Transverse colon (tissue), 4 donors: ENCODE measurements at regions of chr17 and their contacts with region 1.

Region 1: GRCh38 chr17:17496189-17497064 is at the start of gene RASD1:
- DNase-seq: peak; percentile 93
- H3K4me3 ChIP-seq: peak within 1 kb of the TSS; percentile 49 to 67 (median 62)
- H3K27ac ChIP-seq: peak within 1 kb of the TSS; percentile 84 to 87 (median 87)
- H3K4me1 ChIP-seq: peaks cover 9 to 42% (median 28%) of the 10 kb centered on the region in 4 donors
- H3K27me3 ChIP-seq: peaks cover 7% of the 10 kb centered on the region
- CTCF ChIP-seq: peak; percentile 62 to 98 (median 96)
- EP300 ChIP-seq: no peak
- POLR2A ChIP-seq: peak; percentile 97
- total RNA-seq, gene RASD1: 23.5 to 83.8 (median 61.3) TPM

Region 2: GRCh38 chr17:17356149-17356930 is 140.1 kb before region 1 on chr17:
- in situ Hi-C with region 1: loop called in 1 of 4 experiments (anchors 10 kb)
- intact Hi-C with region 1: no loop called
- DNase-seq: peak; percentile 77
- H3K4me3 ChIP-seq: no peak overlapping the region
- H3K27ac ChIP-seq: no peak overlapping the region
- H3K4me1 ChIP-seq: peaks cover 0 to 4% (median 0%) of the 10 kb centered on the region in 4 donors
- H3K27me3 ChIP-seq: no peaks in the 10 kb centered on the region
- CTCF ChIP-seq: peak; percentile 99 to 100 (median 99)
- EP300 ChIP-seq: no peak
- POLR2A ChIP-seq: no peak

Region 3: GRCh38 chr17:17568749-17569195 is 72.3 kb after region 1 on chr17:
- in situ Hi-C with region 1: no loop called
- intact Hi-C with region 1: loop called (anchors 5 kb)
- DNase-seq: peak; percentile 80
- H3K4me3 ChIP-seq: no peak overlapping the region
- H3K27ac ChIP-seq: no peak overlapping the region
- H3K4me1 ChIP-seq: peaks cover 6 to 30% (median 14%) of the 10 kb centered on the region in 4 donors
- H3K27me3 ChIP-seq: no peaks in the 10 kb centered on the region
- CTCF ChIP-seq: peak; percentile 69 to 84 (median 75)
- EP300 ChIP-seq: no peak
- POLR2A ChIP-seq: no peak

Region 4: DNA sequence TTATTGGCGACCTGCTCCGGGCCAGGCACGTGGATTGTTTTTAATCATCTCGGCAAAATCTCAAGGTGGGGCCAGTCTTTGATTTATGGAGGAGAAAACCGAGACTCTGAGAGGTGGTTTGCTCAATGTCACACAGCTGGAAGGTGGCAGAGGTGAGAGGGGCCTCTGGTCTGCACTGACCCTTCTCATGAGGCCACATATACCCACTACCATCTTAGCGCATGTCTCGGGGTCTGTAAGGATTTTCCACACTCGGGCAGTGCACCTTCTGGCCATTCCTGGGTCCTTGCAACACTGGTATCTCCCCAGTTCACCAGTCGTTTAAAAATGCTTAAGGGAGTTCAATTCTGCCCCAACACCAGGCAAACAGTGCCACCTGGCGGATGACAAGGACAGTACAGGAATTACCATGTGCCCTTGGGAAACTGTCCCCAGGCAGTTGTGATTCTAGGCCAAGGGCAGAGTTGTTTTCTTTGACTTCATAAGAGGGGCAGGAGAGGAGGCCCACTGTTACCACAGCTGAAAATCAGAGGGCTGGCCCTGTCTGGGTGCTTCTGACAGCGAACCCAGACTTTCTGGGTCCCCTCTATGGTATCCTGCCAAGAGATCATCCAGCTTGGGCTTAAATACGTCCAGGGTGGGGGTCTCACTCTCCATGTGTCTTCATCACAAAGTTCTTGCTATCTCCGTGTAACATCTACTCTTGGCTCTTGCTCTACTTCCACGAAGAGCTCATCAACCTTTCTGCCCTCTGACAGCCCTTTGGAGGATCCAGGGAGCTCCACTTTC is 145.4 kb after region 1 on chr17:
- in situ Hi-C with region 1: loop called in 1 of 4 experiments (anchors 10 kb)
- intact Hi-C with region 1: no loop called
- DNase-seq: peak; percentile 82
- H3K4me3 ChIP-seq: no peak overlapping the region
- H3K27ac ChIP-seq: no peak overlapping the region
- H3K4me1 ChIP-seq: no peaks in the 10 kb centered on the region
- H3K27me3 ChIP-seq: no peaks in the 10 kb centered on the region
- CTCF ChIP-seq: peak; percentile 89 to 93 (median 92)
- EP300 ChIP-seq: no peak
- POLR2A ChIP-seq: no peak